Common myeloid progenitor, CD34-positive (primary cell): ENCODE measurements at regions of chr3 and their contacts with region 1.

Region 1: DNA sequence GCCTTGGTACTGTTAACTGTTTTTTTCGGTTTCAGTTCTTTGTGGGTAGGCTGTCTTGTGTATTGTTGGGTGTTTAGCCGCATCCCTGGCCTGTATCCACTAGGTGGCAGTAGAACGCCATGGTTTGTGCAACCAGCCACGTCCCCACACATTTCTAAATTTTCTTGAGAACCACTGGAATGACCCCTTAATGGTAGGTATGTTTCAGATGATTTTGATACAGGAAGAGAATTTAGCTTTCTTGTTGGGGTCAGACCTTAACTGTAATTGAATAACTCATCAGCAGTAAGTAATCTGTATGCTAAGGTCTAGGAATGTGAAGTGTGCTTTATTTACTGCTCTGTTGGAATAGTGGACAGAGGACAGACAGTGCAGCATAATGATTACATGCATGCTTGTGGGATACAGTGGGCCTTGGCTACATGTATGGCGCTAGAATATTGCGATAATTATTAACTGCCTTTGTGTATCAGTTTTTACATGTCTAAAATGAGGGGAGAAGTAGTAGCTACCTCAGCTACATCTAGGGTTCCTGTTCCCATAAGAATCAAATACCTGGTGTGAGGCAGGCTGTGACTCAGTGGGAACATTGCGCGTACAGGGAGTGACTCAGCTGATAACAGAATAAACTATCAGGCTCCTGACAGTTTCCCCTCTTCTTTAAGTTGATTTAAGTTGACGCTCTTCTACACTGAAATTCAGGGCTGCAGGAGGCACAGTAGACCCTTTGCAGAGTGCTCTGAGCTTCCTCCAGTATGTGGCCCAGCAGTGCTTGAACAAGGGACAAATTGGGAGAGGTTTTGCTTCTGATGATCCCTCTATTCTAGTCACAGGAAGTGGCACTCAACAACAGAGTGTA is 25.0 kb upstream of the GPR171 start:
- DNase-seq: peak; percentile 83 to 93 (median 86)
- H3K4me3 ChIP-seq: no peak overlapping the region
- H3K27ac ChIP-seq: peak overlapping the region in 1 of 2 experiments; percentile 19
- H3K4me1 ChIP-seq: peaks cover 9 to 49% (median 28%) of the 10 kb centered on the region in 4 experiments
- H3K27me3 ChIP-seq: no peaks in the 10 kb centered on the region

Region 2: GRCh38 chr3:151168269-151169094 is 59.6 kb before region 1 on chr3:
- CTCF ChIA-PET with region 1: interaction called, 10 read pairs
- POLR2A ChIA-PET with region 1: interaction called, 3 read pairs
- DNase-seq: peak in 2 of 3 donors; percentile 60 to 63
- H3K4me3 ChIP-seq: no peak overlapping the region
- H3K27ac ChIP-seq: no peak overlapping the region
- H3K4me1 ChIP-seq: peaks cover 34 to 51% (median 45%) of the 10 kb centered on the region in 4 experiments
- H3K27me3 ChIP-seq: no peaks in the 10 kb centered on the region

Region 3: GRCh38 chr3:151210676-151211381 is 17.2 kb before region 1 on chr3:
- CTCF ChIA-PET with region 1: interaction called, 48 read pairs
- POLR2A ChIA-PET with region 1: no interaction called
- DNase-seq: peak; percentile 61 to 80 (median 74)
- H3K4me3 ChIP-seq: peak overlapping the region in 4 of 7 experiments; percentile 22 to 66 (median 40)
- H3K27ac ChIP-seq: peak overlapping the region in 1 of 2 experiments; percentile 68
- H3K4me1 ChIP-seq: peaks cover 5 to 36% (median 12%) of the 10 kb centered on the region in 4 experiments
- H3K27me3 ChIP-seq: no peaks in the 10 kb centered on the region

Region 4: GRCh38 chr3:151259664-151260063 is 31.6 kb after region 1 on chr3:
- CTCF ChIA-PET with region 1: interaction called, 30 read pairs
- POLR2A ChIA-PET with region 1: no interaction called
- DNase-seq: no peak
- H3K4me3 ChIP-seq: no peak overlapping the region
- H3K27ac ChIP-seq: no peak overlapping the region
- H3K4me1 ChIP-seq: peaks cover 2 to 12% (median 7%) of the 10 kb centered on the region in 4 experiments
- H3K27me3 ChIP-seq: no peaks in the 10 kb centered on the region

Region 5: DNA sequence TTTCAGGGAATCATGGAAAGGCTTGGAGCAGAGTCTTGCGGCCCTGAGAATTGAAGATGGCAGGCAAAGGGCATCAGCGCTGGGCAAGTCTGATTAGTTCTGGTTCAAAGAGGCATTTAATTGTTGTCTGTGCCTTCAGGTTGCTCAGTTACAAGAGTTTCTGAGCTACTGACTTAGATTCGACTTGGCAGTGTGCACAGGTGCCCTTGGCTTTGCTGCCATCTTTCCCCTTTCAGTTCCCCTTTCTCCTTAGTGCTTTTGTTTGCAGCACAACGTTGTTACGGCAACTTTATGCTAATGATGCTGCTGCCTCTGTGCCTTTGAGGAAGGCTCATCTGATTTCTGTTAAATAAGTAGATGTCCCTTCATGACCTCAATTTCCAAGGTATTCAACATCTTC is 37.8 kb after region 1 on chr3:
- CTCF ChIA-PET with region 1: interaction called, 23 read pairs
- POLR2A ChIA-PET with region 1: no interaction called
- DNase-seq: peak; percentile 91 to 98 (median 97)
- H3K4me3 ChIP-seq: peak overlapping the region in 1 of 7 experiments; percentile 35
- H3K27ac ChIP-seq: peak overlapping the region; percentile 95 to 98
- H3K4me1 ChIP-seq: peaks cover 17 to 47% (median 37%) of the 10 kb centered on the region in 4 experiments
- H3K27me3 ChIP-seq: no peaks in the 10 kb centered on the region

Region 6: GRCh38 chr3:151282921-151283320 is 54.9 kb after region 1 on chr3:
- CTCF ChIA-PET with region 1: interaction called, 227 read pairs
- POLR2A ChIA-PET with region 1: interaction called, 3 read pairs
- DNase-seq: peak; percentile 76 to 87 (median 84)
- H3K4me3 ChIP-seq: no peak overlapping the region
- H3K27ac ChIP-seq: no peak overlapping the region
- H3K4me1 ChIP-seq: peaks cover 31 to 51% (median 42%) of the 10 kb centered on the region in 4 experiments
- H3K27me3 ChIP-seq: no peaks in the 10 kb centered on the region

Region 7: DNA sequence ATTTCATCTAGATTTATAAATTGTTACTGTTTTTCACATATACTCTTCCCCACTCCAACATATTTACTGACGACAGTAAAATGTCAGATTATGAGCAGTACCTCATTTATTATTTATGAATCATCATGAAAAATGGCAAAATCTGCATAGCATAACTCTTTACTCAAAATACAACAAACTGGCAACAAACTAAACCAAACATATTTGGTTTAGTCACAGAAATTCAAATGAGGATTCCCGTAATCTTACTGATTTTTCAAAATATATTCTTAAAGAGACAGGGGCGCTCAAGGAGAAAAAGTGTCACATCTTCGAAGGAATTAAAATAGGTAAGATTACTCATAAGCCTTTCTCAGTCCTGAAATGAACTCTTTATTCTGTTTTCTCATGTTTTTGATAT is 91.6 kb after region 1 on chr3:
- CTCF ChIA-PET with region 1: no interaction called
- POLR2A ChIA-PET with region 1: no interaction called
- DNase-seq: no peak
- H3K4me3 ChIP-seq: no peak overlapping the region
- H3K27ac ChIP-seq: no peak overlapping the region
- H3K4me1 ChIP-seq: peaks cover 5 to 21% (median 6%) of the 10 kb centered on the region in 4 experiments
- H3K27me3 ChIP-seq: no peaks in the 10 kb centered on the region

Region 8: GRCh38 chr3:151838583-151839312 is 610.7 kb after region 1 on chr3:
- CTCF ChIA-PET with region 1: interaction called, 16 read pairs
- POLR2A ChIA-PET with region 1: no interaction called
- DNase-seq: peak; percentile 77 to 90 (median 87)
- H3K4me3 ChIP-seq: peak overlapping the region in 4 of 7 experiments; percentile 19 to 67 (median 35)
- H3K27ac ChIP-seq: no peak overlapping the region
- H3K4me1 ChIP-seq: peaks cover 6 to 28% (median 15%) of the 10 kb centered on the region in 4 experiments
- H3K27me3 ChIP-seq: no peaks in the 10 kb centered on the region